ENCODE measurements at regions of chr16 and their contacts with region 1.

Region 1: DNA sequence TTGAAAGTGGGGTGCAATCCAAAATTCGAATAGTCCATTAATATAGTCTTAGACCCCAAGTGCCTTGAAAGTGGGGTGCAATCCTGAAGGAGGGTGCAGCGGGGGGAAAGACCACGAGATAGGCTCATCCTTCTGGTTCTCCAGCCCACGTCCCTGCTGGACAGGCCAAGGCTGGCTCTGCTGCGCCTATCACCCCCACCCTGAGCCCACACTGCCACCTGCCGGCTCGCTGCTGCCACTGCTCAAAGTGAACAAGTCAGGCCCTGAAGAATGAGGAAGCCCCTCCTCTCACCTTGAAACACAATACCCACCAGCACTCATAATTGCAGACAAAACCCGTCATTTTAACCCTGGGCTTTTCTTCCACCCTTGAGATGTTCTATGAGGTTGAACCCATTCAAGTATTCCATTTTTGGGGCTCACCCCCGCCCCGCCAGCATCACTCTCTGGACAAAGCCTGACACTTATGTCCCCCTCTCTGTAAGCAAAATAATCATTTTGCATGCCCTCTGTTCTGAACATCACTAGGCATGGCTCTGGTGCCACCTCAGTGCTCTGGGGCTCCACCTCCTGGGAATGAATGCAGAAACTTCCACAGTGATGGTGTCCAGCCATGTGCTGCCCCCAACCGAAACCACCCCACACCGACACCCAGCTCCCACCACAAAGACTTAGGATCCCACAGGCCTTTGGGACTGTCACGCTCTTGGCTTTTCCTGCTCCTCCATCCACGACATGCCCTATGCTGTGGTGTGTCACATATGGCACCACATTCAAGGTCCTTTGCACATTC is 56.8 kb downstream of the BEAN1 start:
- DNase-seq: peak; percentile 71
- H3K4me3 ChIP-seq: no peak overlapping the region
- H3K27ac ChIP-seq: no peak overlapping the region
- H3K4me1 ChIP-seq: no peaks in the 10 kb centered on the region
- H3K27me3 ChIP-seq: no peaks in the 10 kb centered on the region
- CTCF ChIP-seq: peak; percentile 82 to 92 (median 84)
- POLR2A ChIP-seq: no peak

Region 2: DNA sequence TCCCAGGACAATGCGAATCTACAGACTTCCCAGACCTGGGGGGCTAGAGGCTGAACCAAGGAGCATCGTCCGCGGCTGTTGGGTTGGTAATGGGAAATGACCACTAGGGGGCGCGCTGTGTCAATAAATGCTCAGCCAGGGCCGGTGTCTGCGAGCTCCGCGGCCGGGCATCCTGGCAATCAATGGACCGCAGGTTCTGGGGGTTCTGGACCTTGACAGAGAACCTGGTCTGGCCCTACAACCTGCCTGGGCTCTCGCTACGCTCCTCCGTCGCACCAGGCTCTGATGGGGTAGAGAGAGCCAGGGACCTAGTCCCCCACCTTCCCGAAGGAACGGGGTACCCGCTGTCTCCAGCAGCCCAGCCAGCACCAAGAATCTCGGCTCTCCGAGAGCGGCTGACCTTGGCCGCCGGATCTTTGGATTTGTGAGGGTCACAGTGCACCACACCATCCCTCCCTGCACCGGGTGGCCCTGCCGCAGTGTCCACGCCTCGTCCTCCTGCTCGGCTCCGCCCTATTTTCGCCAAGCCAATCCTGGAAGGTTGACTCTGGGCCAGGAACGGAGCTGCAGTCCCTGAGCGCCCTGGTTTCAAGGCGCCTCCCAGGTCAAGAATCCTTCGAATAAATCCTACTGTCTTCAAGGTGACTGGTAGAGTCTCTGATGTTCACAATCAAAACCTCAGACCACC is 77.2 kb before region 1 on chr16:
- intact Hi-C with region 1: loop called (anchors 2 kb)
- DNase-seq: peak; percentile 80
- H3K4me3 ChIP-seq: peak overlapping the region; percentile 27 to 39
- H3K27ac ChIP-seq: no peak overlapping the region
- H3K4me1 ChIP-seq: peaks cover 5% of the 10 kb centered on the region
- H3K27me3 ChIP-seq: no peaks in the 10 kb centered on the region
- CTCF ChIP-seq: peak; percentile 69 to 86 (median 84)
- POLR2A ChIP-seq: no peak

Region 3: GRCh38 chr16:66516808-66517585 is 33.1 kb after region 1 on chr16:
- intact Hi-C with region 1: loop called (anchors 5 kb)
- DNase-seq: peak; percentile 97
- H3K4me3 ChIP-seq: no peak overlapping the region
- H3K27ac ChIP-seq: peak overlapping the region; percentile 96
- H3K4me1 ChIP-seq: peaks cover 24% of the 10 kb centered on the region
- H3K27me3 ChIP-seq: no peaks in the 10 kb centered on the region
- CTCF ChIP-seq: no peak
- POLR2A ChIP-seq: peak; percentile 32

Region 4: DNA sequence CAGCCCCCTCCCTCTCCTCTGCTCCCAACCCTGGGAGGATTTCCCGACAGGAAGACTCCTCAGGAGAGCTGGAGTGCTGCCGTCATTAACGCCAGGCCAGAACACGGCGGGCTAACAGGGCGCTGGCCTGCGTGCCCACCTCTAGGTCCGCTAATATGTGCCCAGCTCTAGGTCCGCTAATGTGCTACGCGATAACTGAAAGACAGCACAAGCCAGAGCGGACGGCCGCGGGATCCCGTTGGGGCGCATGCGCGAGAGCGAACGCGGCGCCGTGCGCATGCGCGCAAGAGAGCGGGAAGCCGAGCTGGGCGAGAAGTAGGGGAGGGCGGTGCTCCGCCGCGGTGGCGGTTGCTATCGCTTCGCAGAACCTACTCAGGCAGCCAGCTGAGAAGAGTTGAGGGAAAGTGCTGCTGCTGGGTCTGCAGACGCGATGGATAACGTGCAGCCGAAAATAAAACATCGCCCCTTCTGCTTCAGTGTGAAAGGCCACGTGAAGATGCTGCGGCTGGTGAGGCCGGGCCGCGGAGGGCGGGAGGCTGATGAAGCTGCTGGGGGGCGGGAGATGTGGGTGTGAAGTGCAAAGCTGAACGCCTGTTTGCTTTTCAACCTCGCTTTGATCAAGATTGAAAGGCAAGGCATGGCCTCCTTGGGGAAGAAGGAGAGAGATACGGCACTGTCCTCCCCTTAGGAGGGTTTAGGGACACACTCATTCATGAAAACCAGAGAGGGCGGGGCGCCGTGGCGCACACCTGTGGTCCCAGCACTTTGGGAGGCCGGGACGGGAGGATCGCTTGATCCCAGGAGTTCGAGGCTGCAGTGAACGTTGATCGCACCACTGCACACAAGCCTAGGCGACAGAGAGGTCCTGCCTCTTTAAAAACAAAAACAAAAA is 68.6 kb after region 1 on chr16 and contains the start of gene CKLF:
- intact Hi-C with region 1: loop called (anchors 5 kb)
- DNase-seq: peak; percentile 82
- H3K4me3 ChIP-seq: peak within 1 kb of the TSS; percentile 43
- H3K27ac ChIP-seq: peak within 1 kb of the TSS; percentile 84 to 89
- H3K4me1 ChIP-seq: no peaks in the 10 kb centered on the region
- H3K27me3 ChIP-seq: no peaks in the 10 kb centered on the region
- CTCF ChIP-seq: peak in 2 of 4 experiments; percentile 4 to 30
- POLR2A ChIP-seq: peak; percentile 82
- total RNA-seq, gene CKLF: 20.5 to 28.3 TPM

Region 5: GRCh38 chr16:66650707-66651473 is 167.0 kb after region 1 on chr16:
- intact Hi-C with region 1: loop called (anchors 5 kb)
- DNase-seq: peak; percentile 76
- H3K4me3 ChIP-seq: no peak overlapping the region
- H3K27ac ChIP-seq: peak overlapping the region in 1 of 2 donors; percentile 34
- H3K4me1 ChIP-seq: no peaks in the 10 kb centered on the region
- H3K27me3 ChIP-seq: no peaks in the 10 kb centered on the region
- CTCF ChIP-seq: peak; percentile 52 to 87 (median 78)
- POLR2A ChIP-seq: no peak